Gastrocnemius medialis (tissue), 4 donors: ENCODE measurements at regions of chr3 and their contacts with region 1.

Region 1: DNA sequence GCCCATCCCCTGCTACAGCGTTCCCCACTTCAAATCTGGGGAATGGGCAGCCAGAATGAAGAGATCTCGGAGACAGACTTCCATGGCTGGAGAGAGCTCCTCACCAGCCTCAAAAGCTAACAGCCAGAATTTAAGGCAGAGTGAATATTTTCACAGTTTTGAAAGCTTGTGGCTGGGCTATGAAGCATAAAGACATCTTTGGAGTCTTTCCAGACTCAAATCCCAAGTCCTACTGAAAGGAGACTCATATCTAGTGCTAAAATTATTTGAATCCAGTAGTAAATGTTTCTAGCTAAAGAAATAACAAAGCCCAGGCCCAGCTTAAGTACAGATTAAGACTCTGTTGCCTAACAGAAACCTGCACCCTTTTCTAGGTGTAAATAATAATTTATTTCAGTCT is 628.4 kb upstream of the ALCAM start:
- DNase-seq: no peak
- ATAC-seq: no peak
- H3K4me3 ChIP-seq: no peak overlapping the region
- H3K27ac ChIP-seq: no peak overlapping the region
- H3K4me1 ChIP-seq: no peaks in the 10 kb centered on the region
- H3K27me3 ChIP-seq: no peaks in the 10 kb centered on the region
- CTCF ChIP-seq: no peak
- POLR2A ChIP-seq: no peak

Region 2: GRCh38 chr3:104510131-104510849 is 228.0 kb before region 1 on chr3:
- in situ Hi-C with region 1: no loop called
- intact Hi-C with region 1: no loop called
- DNase-seq: no peak
- ATAC-seq: no peak
- H3K4me3 ChIP-seq: no peak overlapping the region
- H3K27ac ChIP-seq: no peak overlapping the region
- H3K4me1 ChIP-seq: no peaks in the 10 kb centered on the region
- H3K27me3 ChIP-seq: no peaks in the 10 kb centered on the region
- CTCF ChIP-seq: no peak
- POLR2A ChIP-seq: no peak

Region 3: DNA sequence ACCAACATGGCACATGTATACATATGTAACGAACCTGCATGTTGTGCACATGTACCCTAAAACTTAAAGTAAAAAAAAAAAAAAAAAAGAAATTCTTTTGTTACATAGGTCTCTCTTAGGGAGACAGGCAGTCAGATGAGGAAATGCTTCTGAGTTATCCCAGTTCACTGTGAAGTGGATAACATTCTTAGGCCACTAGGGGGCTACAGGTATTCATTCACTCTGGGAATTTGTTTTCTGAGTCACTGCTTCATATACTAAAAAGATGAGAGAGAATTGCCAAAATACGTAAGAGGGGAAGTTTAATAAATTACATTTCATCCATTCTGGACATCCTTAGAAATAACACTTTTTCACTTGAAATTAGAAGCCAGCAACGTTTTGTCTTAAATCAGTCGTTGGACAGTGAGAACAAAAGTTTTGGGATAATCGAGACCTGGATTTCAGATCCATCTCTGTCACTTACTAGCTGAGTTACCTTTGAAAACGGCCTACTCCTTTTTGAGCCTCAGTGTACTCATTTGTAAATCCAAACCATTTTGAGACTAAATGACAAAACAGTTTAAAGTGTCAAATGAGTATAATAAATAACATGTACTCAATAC is 110.0 kb before region 1 on chr3:
- in situ Hi-C with region 1: loop called in 1 of 4 experiments (anchors 25 kb)
- intact Hi-C with region 1: no loop called
- DNase-seq: no peak
- ATAC-seq: no peak
- H3K4me3 ChIP-seq: no peak overlapping the region
- H3K27ac ChIP-seq: no peak overlapping the region
- H3K4me1 ChIP-seq: no peaks in the 10 kb centered on the region
- H3K27me3 ChIP-seq: no peaks in the 10 kb centered on the region
- CTCF ChIP-seq: no peak
- POLR2A ChIP-seq: no peak